ENCODE measurements at regions of chr4 and their contacts with region 1.

Region 1: DNA sequence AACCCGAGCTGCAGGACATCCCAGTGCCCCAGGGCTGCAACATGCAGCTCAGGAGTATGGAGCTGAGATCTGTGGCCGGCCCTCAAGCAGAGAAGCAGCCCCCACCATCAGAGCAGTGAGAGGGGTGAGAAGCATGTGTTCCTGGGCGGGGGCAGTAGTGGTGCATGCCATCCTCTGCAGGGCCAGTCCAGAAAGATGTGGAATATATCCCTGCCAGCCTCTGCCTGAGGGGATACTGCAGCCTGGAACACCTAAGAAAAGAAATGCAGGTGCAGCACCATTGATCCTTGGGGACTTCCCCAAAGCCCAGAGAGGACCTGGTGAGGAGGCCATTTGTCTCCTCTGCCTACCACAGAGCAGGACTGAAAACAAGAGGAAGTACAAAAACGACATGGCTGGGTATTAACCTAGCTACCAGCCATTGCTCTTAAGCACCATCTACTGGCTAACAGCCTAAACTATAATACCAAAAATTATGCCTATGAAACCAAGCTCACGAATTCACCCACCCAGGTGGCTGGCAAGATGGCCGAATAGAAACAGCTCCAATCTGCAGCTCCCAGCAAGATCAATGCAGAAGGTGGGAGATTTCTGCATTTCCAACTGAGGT is 158.8 kb downstream of the ADGRA3 start:
- DNase-seq: no peak
- ATAC-seq: peak; percentile 98
- H3K4me3 ChIP-seq: no peak overlapping the region
- H3K27ac ChIP-seq: no peak overlapping the region
- H3K4me1 ChIP-seq: no peaks in the 10 kb centered on the region
- H3K27me3 ChIP-seq: no peaks in the 10 kb centered on the region
- CTCF ChIP-seq: peak in 2 of 3 experiments; percentile 23 to 43; a peak in 3 of 6 replicates
- EP300 ChIP-seq: no peak
- POLR2A ChIP-seq: no peak
- RAD21 ChIP-seq: peak; percentile 11; the same call in 1 of the 2 replicates

Region 2: GRCh38 chr4:22129454-22130029 is 227.6 kb before region 1 on chr4:
- CTCF ChIA-PET with region 1: interaction called, 7 read pairs
- POLR2A ChIA-PET with region 1: no interaction called
- RAD21 ChIA-PET with region 1: interaction called, 3 read pairs
- SMC1A ChIA-PET with region 1: interaction called, 10 read pairs
- in situ Hi-C with region 1: no loop called
- intact Hi-C with region 1: loop called (anchors 1 kb)
- DNase-seq: no peak
- ATAC-seq: peak; percentile 83
- H3K4me3 ChIP-seq: no peak overlapping the region
- H3K27ac ChIP-seq: no peak overlapping the region
- H3K4me1 ChIP-seq: no peaks in the 10 kb centered on the region
- H3K27me3 ChIP-seq: no peaks in the 10 kb centered on the region
- CTCF ChIP-seq: peak; percentile 14 to 53 (median 52); a peak in 4 of 6 replicates
- EP300 ChIP-seq: no peak
- POLR2A ChIP-seq: no peak
- RAD21 ChIP-seq: no peak

Region 3: DNA sequence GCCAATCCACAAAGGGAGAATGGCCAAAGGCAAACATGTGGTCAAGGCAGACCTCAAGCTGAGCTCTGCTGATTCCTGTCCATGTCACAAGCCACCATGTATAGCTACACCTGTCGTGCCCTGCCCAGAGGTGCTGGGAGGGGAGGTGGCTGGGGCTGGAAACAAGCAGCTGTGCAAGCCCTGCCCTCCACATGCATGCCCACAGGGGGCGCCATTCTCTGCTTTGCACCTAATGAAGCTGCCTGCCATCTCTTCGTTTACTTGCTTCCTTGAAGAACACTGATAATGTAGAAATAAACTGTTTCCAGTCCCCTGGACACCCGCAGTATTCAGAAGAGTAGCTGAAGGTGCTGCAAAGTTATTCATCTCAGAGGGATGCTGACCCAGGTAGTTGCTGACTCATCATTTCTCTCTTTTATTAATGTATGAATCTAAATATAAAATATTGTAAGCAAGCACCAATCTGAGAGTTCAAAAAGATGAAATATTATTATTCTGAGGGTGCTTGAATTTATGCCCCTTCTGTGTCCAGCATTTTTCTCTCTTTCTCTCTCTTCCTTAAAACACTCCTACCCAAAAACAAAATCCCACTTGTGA is 119.8 kb before region 1 on chr4:
- CTCF ChIA-PET with region 1: interaction called, 30 read pairs
- POLR2A ChIA-PET with region 1: no interaction called
- RAD21 ChIA-PET with region 1: interaction called, 9 read pairs
- SMC1A ChIA-PET with region 1: interaction called, 8 read pairs
- in situ Hi-C with region 1: no loop called
- intact Hi-C with region 1: loop called (anchors 5 kb)
- DNase-seq: no peak
- ATAC-seq: peak; percentile 89
- H3K4me3 ChIP-seq: no peak overlapping the region
- H3K27ac ChIP-seq: no peak overlapping the region
- H3K4me1 ChIP-seq: no peaks in the 10 kb centered on the region
- H3K27me3 ChIP-seq: no peaks in the 10 kb centered on the region
- CTCF ChIP-seq: peak in 2 of 3 experiments; percentile 32 to 35; a peak in 2 of 6 replicates
- EP300 ChIP-seq: no peak
- POLR2A ChIP-seq: no peak
- RAD21 ChIP-seq: no peak

Region 4: GRCh38 chr4:22343606-22344005 is 13.5 kb before region 1 on chr4:
- CTCF ChIA-PET with region 1: interaction called, 16 read pairs
- POLR2A ChIA-PET with region 1: no interaction called
- RAD21 ChIA-PET with region 1: no interaction called
- SMC1A ChIA-PET with region 1: interaction called, 6 read pairs
- in situ Hi-C with region 1: no loop called
- intact Hi-C with region 1: no loop called
- DNase-seq: no peak
- ATAC-seq: no peak; the same call in 2 of the 3 replicates
- H3K4me3 ChIP-seq: no peak overlapping the region
- H3K27ac ChIP-seq: no peak overlapping the region
- H3K4me1 ChIP-seq: no peaks in the 10 kb centered on the region
- H3K27me3 ChIP-seq: no peaks in the 10 kb centered on the region
- CTCF ChIP-seq: no peak
- EP300 ChIP-seq: no peak
- POLR2A ChIP-seq: no peak
- RAD21 ChIP-seq: no peak

Region 5: DNA sequence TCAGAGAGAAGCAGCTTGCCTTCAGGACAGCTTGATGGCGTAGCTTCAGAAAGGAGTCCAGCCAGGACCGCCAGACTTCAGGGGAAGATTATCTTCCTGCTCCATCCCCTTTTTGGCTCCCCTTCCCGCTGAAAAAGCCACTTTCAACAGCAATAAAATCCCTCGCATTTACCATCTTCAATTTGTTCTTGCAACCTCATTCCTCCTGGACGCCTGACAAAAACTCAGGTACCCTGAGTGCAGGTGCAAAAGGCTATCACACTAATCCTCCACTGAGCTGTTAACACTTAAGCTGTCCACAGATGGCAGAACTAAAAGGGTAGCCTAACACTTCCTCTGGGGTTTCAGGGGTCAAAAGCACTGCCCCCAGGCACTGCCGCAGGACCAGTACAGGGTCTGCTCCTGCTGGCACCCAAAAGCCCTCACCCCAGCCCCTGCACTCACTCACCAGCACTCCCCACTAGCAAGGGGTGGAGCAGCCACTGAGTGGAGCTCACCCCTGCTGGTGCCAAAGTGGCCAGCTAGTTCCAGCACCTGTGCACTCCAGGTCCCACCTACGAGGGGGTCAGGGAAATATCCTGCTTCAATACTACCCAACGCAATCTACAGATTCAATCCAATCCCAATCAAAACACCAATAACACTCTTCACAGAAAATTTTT is 12.9 kb after region 1 on chr4:
- CTCF ChIA-PET with region 1: interaction called, 20 read pairs
- POLR2A ChIA-PET with region 1: no interaction called
- RAD21 ChIA-PET with region 1: interaction called, 3 read pairs
- SMC1A ChIA-PET with region 1: interaction called, 4 read pairs
- in situ Hi-C with region 1: no loop called
- intact Hi-C with region 1: no loop called
- DNase-seq: no peak
- ATAC-seq: no peak; the same call in 2 of the 3 replicates
- H3K4me3 ChIP-seq: no peak overlapping the region
- H3K27ac ChIP-seq: no peak overlapping the region
- H3K4me1 ChIP-seq: no peaks in the 10 kb centered on the region
- H3K27me3 ChIP-seq: no peaks in the 10 kb centered on the region
- CTCF ChIP-seq: no peak
- EP300 ChIP-seq: no peak
- POLR2A ChIP-seq: no peak
- RAD21 ChIP-seq: no peak

Region 6: GRCh38 chr4:22551550-22551949 is 194.5 kb after region 1 on chr4:
- CTCF ChIA-PET with region 1: no interaction called
- POLR2A ChIA-PET with region 1: no interaction called
- RAD21 ChIA-PET with region 1: no interaction called
- SMC1A ChIA-PET with region 1: no interaction called
- in situ Hi-C with region 1: no loop called
- intact Hi-C with region 1: no loop called
- DNase-seq: no peak
- ATAC-seq: no peak
- H3K4me3 ChIP-seq: no peak overlapping the region
- H3K27ac ChIP-seq: no peak overlapping the region
- H3K4me1 ChIP-seq: no peaks in the 10 kb centered on the region
- H3K27me3 ChIP-seq: no peaks in the 10 kb centered on the region
- CTCF ChIP-seq: no peak
- EP300 ChIP-seq: no peak
- POLR2A ChIP-seq: no peak
- RAD21 ChIP-seq: no peak

Region 7: GRCh38 chr4:22596409-22596808 is 239.3 kb after region 1 on chr4:
- CTCF ChIA-PET with region 1: no interaction called
- POLR2A ChIA-PET with region 1: no interaction called
- RAD21 ChIA-PET with region 1: no interaction called
- SMC1A ChIA-PET with region 1: no interaction called
- in situ Hi-C with region 1: no loop called
- intact Hi-C with region 1: no loop called
- DNase-seq: no peak
- ATAC-seq: peak; percentile 6; the same call in 1 of the 3 replicates
- H3K4me3 ChIP-seq: no peak overlapping the region
- H3K27ac ChIP-seq: no peak overlapping the region
- H3K4me1 ChIP-seq: no peaks in the 10 kb centered on the region
- H3K27me3 ChIP-seq: no peaks in the 10 kb centered on the region
- CTCF ChIP-seq: no peak
- EP300 ChIP-seq: no peak
- POLR2A ChIP-seq: no peak
- RAD21 ChIP-seq: no peak

Measured in GM12878 (cell line).